ENCODE measurements at regions of chr7 and their contacts with region 1.

Region 1: GRCh38 chr7:36440880-36441279 is 51.2 kb downstream of the ANLN start:
- DNase-seq: no peak
- H3K4me3 ChIP-seq: no peak overlapping the region
- H3K27me3 ChIP-seq: no peaks in the 10 kb centered on the region
- CTCF ChIP-seq: peak; percentile 54

Region 2: GRCh38 chr7:36360244-36360643 is 80.6 kb before region 1 on chr7:
- CTCF ChIA-PET with region 1: no interaction called
- POLR2A ChIA-PET with region 1: no interaction called
- DNase-seq: no peak
- H3K4me3 ChIP-seq: no peak overlapping the region
- H3K27me3 ChIP-seq: no peaks in the 10 kb centered on the region
- CTCF ChIP-seq: no peak

Region 3: DNA sequence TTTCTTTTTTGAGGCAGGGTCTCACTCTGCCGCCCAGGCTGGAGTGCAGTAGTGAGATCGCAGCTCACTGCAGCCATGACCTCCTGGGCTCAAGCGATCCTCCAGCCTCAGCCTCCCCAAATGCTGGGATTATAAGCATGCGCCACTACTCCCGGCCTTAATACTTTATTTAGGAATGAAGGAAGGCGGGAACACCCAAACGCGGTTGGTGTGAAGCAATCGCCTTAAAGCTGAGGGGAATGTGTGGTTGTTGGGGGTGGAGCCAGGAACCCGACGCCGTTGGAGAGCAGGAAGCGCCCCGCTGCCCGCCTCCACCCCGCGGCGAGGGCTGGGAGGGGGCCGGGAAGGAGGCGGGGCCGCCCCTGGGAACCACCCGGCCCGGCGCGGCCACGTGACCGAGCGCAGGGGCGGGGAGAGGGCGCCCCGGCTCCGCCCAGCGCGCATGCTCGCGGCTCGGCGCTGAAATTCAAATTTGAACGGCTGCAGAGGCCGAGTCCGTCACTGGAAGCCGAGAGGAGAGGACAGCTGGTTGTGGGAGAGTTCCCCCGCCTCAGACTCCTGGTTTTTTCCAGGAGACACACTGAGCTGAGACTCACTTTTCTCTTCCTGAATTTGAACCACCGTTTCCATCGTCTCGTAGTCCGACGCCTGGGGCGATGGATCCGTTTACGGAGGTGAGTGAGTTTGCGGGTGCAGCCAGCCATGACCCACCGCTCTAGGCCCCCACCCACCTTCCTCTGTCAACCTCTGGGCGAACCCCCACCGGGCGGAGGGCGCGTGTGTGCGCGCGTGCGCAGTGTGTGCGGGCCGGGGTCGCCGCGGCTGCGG is 51.3 kb before region 1 on chr7 and contains the start of gene ANLN:
- CTCF ChIA-PET with region 1: interaction called, 11 read pairs
- POLR2A ChIA-PET with region 1: no interaction called
- DNase-seq: peak; percentile 56
- H3K4me3 ChIP-seq: peak within 1 kb of the TSS; percentile 90
- H3K27me3 ChIP-seq: no peaks in the 10 kb centered on the region
- CTCF ChIP-seq: no peak
- polyA plus RNA-seq, gene ANLN: 54.2 and 63.3 TPM in 2 replicates

Region 4: GRCh38 chr7:36430186-36430585 is 10.7 kb before region 1 on chr7:
- CTCF ChIA-PET with region 1: interaction called, 14 read pairs
- POLR2A ChIA-PET with region 1: no interaction called
- DNase-seq: no peak
- H3K4me3 ChIP-seq: no peak overlapping the region
- H3K27me3 ChIP-seq: no peaks in the 10 kb centered on the region
- CTCF ChIP-seq: no peak

Region 5: GRCh38 chr7:36473454-36474282 is 32.8 kb after region 1 on chr7:
- CTCF ChIA-PET with region 1: interaction called, 15 read pairs
- POLR2A ChIA-PET with region 1: no interaction called
- DNase-seq: no peak
- H3K4me3 ChIP-seq: no peak overlapping the region
- H3K27me3 ChIP-seq: no peaks in the 10 kb centered on the region
- CTCF ChIP-seq: peak; percentile 50

Region 6: DNA sequence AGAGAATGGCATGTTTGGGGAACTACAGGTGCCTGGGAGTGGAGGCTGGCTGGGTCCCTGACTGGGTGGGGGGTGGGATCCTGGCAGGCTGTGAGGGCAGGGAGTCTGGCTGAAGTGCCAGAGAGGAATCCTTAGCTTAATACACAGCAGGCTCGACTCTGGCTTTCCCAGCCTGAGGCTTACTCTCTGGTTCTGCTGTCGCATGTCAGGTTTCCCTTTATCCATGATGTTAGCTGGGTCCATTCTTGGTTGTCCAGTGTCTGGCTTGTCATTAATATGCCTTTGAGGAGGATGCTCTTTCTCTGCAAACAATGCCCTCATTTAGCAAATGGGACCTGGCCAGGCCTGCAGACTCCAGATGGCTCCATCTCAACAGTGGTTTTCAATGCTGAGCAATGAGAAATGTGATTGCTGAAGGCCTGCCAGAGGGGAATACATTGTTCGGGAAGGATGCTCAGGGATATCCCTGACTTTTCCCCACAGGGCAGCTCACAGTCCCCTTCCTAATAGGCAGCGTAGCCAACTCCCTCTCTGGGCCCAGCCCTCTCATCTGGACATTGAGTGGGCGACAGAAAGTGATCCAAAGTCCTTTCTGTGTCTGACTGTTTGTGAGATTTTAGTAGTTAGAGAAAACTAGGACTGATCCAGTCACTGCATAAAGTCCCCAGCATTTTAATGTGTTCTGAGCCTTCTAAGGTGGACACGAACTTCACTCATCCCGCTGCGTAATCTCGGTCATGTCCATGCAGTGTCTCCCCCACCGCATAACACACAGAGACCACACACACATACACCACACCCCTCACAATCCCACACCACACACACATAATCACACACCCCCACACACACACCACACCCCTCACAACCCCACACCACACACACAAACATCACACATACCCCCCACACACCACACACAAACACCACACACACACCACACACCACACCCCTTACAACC is 73.7 kb after region 1 on chr7:
- CTCF ChIA-PET with region 1: no interaction called
- POLR2A ChIA-PET with region 1: no interaction called
- DNase-seq: no peak
- H3K4me3 ChIP-seq: no peak overlapping the region
- H3K27me3 ChIP-seq: no peaks in the 10 kb centered on the region
- CTCF ChIP-seq: no peak

Measured in BJ (cell line).